Calu3 (cell line): ENCODE measurements at regions of chr2 and their contacts with region 1.

Region 1: GRCh38 chr2:219294356-219295351 is 14.5 kb downstream of the PTPRN start:
- DNase-seq: peak; percentile 94
- H3K4me3 Mint-ChIP-seq: peak overlapping the region; percentile 53
- H3K27ac Mint-ChIP-seq: no peak overlapping the region
- H3K4me1 Mint-ChIP-seq: peaks cover 6% of the 10 kb centered on the region
- H3K27me3 Mint-ChIP-seq: peaks cover 15% of the 10 kb centered on the region
- CTCF ChIP-seq: peak; percentile 99

Region 2: DNA sequence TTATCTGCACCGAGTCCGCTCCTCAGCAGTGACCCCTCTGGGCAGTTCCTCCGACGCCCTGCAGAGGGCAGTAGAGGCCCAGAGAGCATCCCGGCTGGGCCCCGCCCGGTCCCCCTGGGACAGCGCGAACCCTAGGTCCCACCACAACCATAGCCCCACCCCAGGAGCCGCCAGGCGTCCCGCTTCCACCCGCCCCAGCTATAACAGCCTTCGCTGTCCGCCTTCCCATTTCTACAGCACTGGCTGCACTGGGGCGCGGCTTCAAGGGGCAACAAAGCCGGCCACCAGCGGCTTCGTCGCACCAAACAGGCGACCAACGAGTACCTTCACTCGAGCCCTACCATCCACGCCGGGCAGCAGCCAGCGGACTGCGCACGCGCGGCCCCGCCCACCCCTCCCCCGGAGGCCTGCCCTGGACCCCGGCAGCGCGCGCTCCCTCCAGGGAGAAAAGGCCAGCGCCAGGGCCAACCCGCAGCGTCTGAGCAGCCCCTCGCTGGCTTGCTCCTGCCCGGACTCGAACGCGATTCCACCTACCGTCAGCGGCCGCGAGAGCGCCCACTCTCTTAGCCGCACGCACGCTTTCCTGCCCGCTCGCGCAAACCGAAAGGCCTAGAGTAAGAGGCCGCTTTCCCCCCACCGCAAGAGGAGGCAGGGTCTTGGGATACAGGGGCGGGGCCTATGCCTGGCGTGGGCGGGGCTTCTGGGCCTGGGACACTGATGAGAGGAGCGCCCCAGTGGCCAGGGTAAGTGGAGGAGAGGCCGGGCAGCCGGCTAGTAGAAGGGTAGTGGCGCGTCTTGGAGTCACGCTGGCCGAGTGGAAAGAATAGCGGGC is 134.3 kb before region 1 on chr2 and contains the start of gene NHEJ1:
- CTCF ChIA-PET with region 1: no interaction called
- intact Hi-C with region 1: loop called (anchors 1 kb)
- DNase-seq: peak; percentile 97
- H3K4me3 Mint-ChIP-seq: peak within 1 kb of the TSS; percentile 83
- H3K27ac Mint-ChIP-seq: peak within 1 kb of the TSS; percentile 80
- H3K4me1 Mint-ChIP-seq: peaks cover 10% of the 10 kb centered on the region
- H3K27me3 Mint-ChIP-seq: no peaks in the 10 kb centered on the region
- CTCF ChIP-seq: peak; percentile 98
- total RNA-seq, gene NHEJ1: 12.1 and 12.4 TPM in 2 replicates

Region 3: GRCh38 chr2:219177552-219178376 is 116.9 kb before region 1 on chr2 and contains the start of gene RETREG2:
- CTCF ChIA-PET with region 1: interaction called, 8 read pairs
- intact Hi-C with region 1: loop called (anchors 5 kb)
- DNase-seq: peak; percentile 85
- H3K4me3 Mint-ChIP-seq: peak within 1 kb of the TSS; percentile 98
- H3K27ac Mint-ChIP-seq: peak within 1 kb of the TSS; percentile 97
- H3K4me1 Mint-ChIP-seq: peaks cover 30% of the 10 kb centered on the region
- H3K27me3 Mint-ChIP-seq: no peaks in the 10 kb centered on the region
- CTCF ChIP-seq: peak; percentile 34
- total RNA-seq, gene RETREG2: 67.9 and 69.7 TPM in 2 replicates

Region 4: GRCh38 chr2:219253753-219254590 is 40.7 kb before region 1 on chr2 and contains the start of gene TUBA4A:
- CTCF ChIA-PET with region 1: interaction called, 26 read pairs
- intact Hi-C with region 1: loop called (anchors 5 kb)
- DNase-seq: peak; percentile 87
- H3K4me3 Mint-ChIP-seq: peak within 1 kb of the TSS; percentile 95
- H3K27ac Mint-ChIP-seq: peak within 1 kb of the TSS; percentile 70
- H3K4me1 Mint-ChIP-seq: peaks cover 45% of the 10 kb centered on the region
- H3K27me3 Mint-ChIP-seq: peaks cover 1% of the 10 kb centered on the region
- CTCF ChIP-seq: no peak
- total RNA-seq, gene TUBA4A: 68.8 and 97.9 TPM in 2 replicates

Region 5: GRCh38 chr2:219278655-219279516 is 15.8 kb before region 1 on chr2 and contains the start of gene DNAJB2:
- CTCF ChIA-PET with region 1: interaction called, 41 read pairs
- intact Hi-C with region 1: no loop called
- DNase-seq: peak; percentile 99
- H3K4me3 Mint-ChIP-seq: peak within 1 kb of the TSS; percentile 87
- H3K27ac Mint-ChIP-seq: peak within 1 kb of the TSS; percentile 83
- H3K4me1 Mint-ChIP-seq: peaks cover 52% of the 10 kb centered on the region
- H3K27me3 Mint-ChIP-seq: no peaks in the 10 kb centered on the region
- CTCF ChIP-seq: no peak
- total RNA-seq, gene DNAJB2: 55.1 and 68.2 TPM in 2 replicates

Region 6: GRCh38 chr2:219402665-219403515 is 108.2 kb after region 1 on chr2:
- CTCF ChIA-PET with region 1: no interaction called
- intact Hi-C with region 1: no loop called
- DNase-seq: peak; percentile 66
- H3K4me3 Mint-ChIP-seq: no peak overlapping the region
- H3K27ac Mint-ChIP-seq: no peak overlapping the region
- H3K4me1 Mint-ChIP-seq: peaks cover 17% of the 10 kb centered on the region
- H3K27me3 Mint-ChIP-seq: peaks cover 10% of the 10 kb centered on the region
- CTCF ChIP-seq: peak; percentile 79